ENCODE measurements at regions of chr1 and their contacts with region 1.

Region 1: DNA sequence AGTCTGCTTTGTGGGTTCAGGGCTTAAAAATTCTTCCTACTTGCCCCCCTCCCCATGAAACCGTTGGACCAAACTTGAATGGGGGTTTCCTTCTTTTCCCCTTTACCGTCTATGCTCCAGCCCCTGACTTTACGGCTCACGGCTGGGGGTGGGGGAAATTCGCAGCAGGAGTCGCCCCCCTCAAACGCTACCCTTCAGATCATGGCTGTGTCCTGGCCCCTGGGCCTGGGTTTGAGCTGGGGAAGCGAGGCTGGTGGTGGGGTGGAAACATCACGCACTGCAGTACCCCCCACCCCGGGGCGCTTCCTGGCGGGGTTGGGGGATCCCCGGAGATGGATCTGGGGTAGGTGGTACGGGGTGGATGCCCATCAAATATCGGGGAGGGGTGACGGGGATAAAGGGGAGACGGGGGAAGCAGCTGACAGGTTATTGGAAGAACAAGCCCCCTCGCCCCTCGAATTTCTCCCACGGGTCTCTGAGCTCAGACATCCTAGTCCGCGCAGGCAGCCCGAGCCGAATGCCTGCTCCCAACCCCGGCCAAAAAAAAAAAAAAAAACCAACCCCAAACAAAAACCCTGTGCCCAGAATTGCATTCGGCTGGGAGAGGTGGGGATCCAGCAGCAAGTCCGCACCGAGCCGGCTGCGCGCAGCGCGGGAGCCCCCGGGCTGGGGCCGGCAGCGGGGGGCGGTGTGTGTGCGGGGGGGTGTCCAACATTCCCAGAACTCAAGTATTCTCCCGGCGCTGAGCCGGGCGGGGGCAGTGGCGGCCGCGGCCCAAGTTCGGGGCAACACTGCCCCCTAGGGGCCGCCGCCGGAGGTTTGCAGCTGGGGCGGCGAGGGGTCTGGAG is 59.0 kb upstream of the ACOT11 start:
- DNase-seq: peak; percentile 86
- H3K4me3 ChIP-seq: peak overlapping the region; percentile 57 to 68
- H3K27ac ChIP-seq: peak overlapping the region; percentile 77 to 86
- H3K4me1 ChIP-seq: peaks cover 27% of the 10 kb centered on the region
- H3K27me3 ChIP-seq: no peaks in the 10 kb centered on the region
- CTCF ChIP-seq: peak; percentile 97 to 99 (median 98)
- POLR2A ChIP-seq: no peak

Region 2: DNA sequence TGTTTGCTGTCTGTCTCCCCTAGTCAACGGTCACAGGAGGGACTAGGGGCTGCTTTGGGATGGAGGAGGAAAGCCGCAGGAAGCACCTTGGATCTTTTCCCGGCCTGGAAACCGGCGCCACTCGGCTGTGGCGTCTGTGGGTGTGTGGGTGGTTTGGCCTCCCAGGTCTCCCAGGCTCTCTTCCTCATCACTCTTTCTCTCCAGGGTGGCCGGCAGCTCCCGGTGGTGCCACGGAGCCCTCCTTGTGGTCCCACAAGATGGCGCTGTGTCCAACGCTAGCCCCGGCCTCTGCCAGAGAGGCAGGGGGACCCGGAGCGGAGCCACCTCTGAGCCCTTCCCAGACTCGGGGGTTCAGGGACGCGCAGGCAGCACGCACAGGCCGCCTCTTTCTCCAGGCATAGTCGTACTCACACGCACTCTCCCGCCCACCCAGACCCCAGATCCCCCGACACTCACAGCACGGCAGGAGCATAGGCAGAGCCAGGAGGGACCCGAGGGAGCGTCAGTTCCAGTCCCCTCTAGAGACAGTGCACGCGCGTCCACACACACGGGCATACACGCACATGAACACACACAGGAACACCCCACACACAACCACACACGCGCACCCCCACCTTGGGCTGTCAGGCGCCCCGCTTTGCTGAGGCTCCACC is 367.4 kb before region 1 on chr1:
- intact Hi-C with region 1: loop called (anchors 10 kb)
- DNase-seq: peak; percentile 85
- H3K4me3 ChIP-seq: peak overlapping the region; percentile 12 to 30
- H3K27ac ChIP-seq: peak overlapping the region in 1 of 2 donors; percentile 7
- H3K4me1 ChIP-seq: peaks cover 12% of the 10 kb centered on the region
- H3K27me3 ChIP-seq: no peaks in the 10 kb centered on the region
- CTCF ChIP-seq: peak; percentile 51 to 75 (median 66)
- POLR2A ChIP-seq: no peak